Common myeloid progenitor, CD34-positive (primary cell): ENCODE measurements at regions of chr1 and their contacts with region 1.

Region 1: DNA sequence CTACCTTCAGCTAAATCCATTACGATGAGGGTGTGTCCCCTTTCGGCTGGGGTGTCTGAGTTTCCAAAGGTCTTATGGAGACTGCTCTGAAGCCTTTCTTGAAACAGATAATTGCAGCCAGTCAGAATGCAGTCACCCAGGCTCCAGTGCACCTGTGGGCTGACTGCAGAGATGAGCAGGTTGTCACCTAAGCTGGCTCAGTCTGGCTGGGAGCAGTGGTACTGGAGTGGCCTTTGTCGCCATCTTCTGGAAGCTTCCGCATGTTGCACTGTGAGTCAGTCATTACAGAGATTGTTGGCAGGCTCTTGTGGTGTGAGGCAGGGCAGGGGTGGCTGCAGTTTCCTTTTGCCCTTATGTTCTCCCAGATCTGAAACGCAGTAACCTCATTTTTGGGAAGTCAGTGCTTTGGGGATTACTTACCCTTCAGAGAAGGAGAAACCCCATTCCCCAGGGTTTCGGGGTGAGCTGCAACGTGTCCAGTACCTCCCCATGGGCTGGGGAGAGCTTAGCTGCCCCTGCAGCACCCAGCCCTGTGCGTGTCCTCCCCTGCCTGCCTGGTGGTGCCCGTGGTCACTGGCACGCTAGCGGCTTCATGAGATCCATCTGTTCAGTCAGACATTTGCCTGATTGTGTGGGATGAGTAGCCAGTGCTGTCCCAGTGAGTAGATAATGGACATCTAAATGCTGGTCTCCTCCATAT is 48.0 kb downstream of the SMYD2 start:
- DNase-seq: peak; percentile 64 to 84 (median 75)
- H3K4me3 ChIP-seq: no peak overlapping the region
- H3K27ac ChIP-seq: no peak overlapping the region
- H3K4me1 ChIP-seq: peaks cover 6 to 21% (median 12%) of the 10 kb centered on the region in 4 experiments
- H3K27me3 ChIP-seq: no peaks in the 10 kb centered on the region

Region 2: DNA sequence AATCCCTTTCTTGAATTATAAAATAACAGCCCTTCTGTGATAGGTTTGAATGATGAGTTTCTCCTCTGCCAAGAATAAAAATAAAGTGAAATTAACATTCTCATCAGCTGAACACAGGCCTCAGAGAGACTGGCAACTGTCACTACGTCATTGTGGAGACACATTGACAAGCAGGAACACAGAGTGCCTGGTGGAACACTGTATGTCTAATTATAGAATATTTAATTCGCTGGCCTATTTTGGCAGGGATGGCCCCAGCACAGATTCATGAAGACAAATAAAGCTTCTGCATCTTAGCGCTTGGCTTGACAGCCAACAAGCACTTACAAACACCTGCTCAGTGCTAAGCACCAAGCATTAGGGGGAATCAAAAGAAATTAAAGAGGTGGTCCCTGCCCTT is 99.9 kb before region 1 on chr1:
- CTCF ChIA-PET with region 1: interaction called, 14 read pairs
- POLR2A ChIA-PET with region 1: no interaction called
- DNase-seq: no peak
- H3K4me3 ChIP-seq: no peak overlapping the region
- H3K27ac ChIP-seq: no peak overlapping the region
- H3K4me1 ChIP-seq: peaks cover 0 to 8% (median 2%) of the 10 kb centered on the region in 4 experiments
- H3K27me3 ChIP-seq: peaks cover 0 to 2% (median 0%) of the 10 kb centered on the region in 5 experiments

Region 3: DNA sequence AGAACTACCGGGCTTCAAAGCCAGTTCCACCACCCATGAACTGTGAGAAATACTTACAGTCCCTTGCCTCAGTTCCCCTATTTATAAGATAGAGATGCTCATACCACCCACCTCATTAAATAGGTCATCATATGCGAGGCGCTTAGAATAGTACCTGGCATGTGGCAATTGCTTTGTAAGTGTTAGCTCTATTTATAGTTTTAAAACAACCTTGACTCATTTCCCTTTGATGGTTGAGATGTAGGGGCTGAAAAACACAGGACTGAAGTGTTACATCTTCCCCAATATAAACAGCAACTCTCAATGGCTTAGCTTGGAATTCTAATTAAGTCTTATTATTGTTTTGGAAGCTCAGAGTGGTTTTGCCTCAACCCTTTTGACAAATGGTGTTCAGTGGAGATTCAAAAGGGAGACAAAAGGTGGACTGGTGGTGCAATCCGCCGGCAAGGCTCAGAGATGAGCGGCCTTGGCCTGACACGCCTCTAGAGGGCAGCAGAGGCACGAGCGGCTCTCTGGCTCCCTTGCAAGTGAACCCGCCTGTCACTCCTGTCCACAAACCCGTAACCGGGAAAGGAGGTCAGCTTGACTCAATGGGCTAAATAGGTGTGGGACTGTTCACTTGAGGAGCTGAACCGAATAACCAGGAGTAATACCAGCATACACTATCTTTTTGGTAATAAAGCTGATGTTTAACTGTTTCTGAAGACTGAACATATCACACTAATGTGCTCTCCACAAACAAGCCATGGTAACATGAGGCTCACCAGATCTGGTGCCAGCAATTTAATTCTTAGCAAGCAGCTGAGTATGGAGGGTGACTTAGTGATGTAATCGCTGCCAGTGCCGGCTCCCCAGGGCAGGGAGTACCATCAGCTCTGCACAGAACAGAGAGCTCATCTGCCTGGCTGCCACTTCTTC is 67.5 kb before region 1 on chr1:
- CTCF ChIA-PET with region 1: interaction called, 277 read pairs
- POLR2A ChIA-PET with region 1: interaction called, 3 read pairs
- DNase-seq: peak; percentile 65 to 74 (median 70)
- H3K4me3 ChIP-seq: peak overlapping the region in 2 of 7 experiments; percentile 16 to 30
- H3K27ac ChIP-seq: no peak overlapping the region
- H3K4me1 ChIP-seq: peaks cover 0 to 4% (median 0%) of the 10 kb centered on the region in 4 experiments
- H3K27me3 ChIP-seq: peaks cover 0 to 29% (median 12%) of the 10 kb centered on the region in 5 experiments

Region 4: DNA sequence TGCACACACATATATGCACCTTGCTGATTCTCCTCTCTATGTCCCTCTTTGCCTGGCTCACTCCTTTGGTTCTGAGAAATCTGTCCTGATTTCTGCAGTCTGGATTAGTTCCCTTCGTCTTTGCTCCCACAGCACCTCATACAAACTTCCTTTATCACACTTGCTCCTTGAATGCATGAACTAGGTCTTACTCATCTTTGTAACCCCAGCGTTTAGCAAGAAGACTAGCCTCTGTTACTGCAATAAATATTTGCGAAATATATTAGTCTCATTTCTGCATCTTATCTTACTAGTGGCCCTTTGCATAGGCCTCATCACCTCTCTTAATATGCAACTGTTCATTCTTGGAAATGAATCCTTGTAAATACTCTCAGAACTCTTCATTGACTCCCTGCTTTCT is 36.6 kb before region 1 on chr1:
- CTCF ChIA-PET with region 1: interaction called, 10 read pairs
- POLR2A ChIA-PET with region 1: no interaction called
- DNase-seq: no peak
- H3K4me3 ChIP-seq: no peak overlapping the region
- H3K27ac ChIP-seq: no peak overlapping the region
- H3K4me1 ChIP-seq: peaks cover 0 to 6% (median 2%) of the 10 kb centered on the region in 4 experiments
- H3K27me3 ChIP-seq: no peaks in the 10 kb centered on the region

Region 5: DNA sequence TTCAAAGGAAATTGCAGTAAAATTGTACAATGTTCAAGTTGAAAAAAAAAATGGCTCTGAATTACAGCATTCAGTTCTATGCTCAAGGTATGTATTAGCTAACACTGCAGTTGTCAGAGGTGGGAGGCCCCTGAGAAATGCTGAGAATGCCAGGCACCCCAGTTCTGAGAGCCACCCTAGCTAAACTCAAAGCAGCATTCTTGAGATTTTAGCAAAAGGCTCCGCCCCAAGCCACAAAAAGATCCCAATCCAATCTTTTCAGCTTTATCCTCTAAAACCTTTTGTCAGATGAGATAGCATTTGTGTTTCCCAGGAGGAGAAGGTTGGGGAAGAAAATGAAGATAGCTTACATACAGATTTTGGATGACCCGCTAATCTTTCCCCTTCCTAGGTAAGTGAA is 20.9 kb after region 1 on chr1:
- CTCF ChIA-PET with region 1: interaction called, 23 read pairs
- POLR2A ChIA-PET with region 1: no interaction called
- DNase-seq: no peak
- H3K4me3 ChIP-seq: no peak overlapping the region
- H3K27ac ChIP-seq: no peak overlapping the region
- H3K4me1 ChIP-seq: no peaks in the 10 kb centered on the region
- H3K27me3 ChIP-seq: no peaks in the 10 kb centered on the region

Region 6: DNA sequence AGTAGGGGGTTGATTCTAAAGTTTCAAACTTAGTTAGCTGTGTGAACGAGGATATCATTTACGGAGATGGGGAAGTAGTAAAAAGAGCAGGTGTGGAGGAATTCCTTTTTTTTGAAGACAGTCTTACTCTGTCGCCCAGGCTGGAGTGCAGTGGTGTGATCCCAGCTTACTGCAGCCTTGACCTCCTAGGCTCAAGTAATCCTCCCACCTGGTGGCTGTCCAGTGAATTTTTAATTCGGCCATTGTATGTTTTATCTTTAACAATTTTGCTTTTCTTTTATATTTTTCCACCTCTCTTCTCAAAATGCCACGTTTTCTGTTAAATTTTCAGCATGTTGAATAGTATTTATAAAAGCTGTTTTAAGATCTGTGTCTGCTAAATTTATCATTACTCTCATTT is 261.8 kb after region 1 on chr1:
- CTCF ChIA-PET with region 1: interaction called, 84 read pairs
- POLR2A ChIA-PET with region 1: no interaction called
- DNase-seq: no peak
- H3K4me3 ChIP-seq: no peak overlapping the region
- H3K27ac ChIP-seq: no peak overlapping the region
- H3K4me1 ChIP-seq: no peaks in the 10 kb centered on the region
- H3K27me3 ChIP-seq: no peaks in the 10 kb centered on the region